Head of caudate nucleus (tissue), 42 donors: ENCODE measurements at regions of chr1 and their contacts with region 1.

Region 1: GRCh38 chr1:178189814-178190213 is 95.9 kb downstream of the RASAL2 start:
- DNase-seq: peak in 26 of 42 donors; percentile 5 to 68 (median 30)

Region 2: DNA sequence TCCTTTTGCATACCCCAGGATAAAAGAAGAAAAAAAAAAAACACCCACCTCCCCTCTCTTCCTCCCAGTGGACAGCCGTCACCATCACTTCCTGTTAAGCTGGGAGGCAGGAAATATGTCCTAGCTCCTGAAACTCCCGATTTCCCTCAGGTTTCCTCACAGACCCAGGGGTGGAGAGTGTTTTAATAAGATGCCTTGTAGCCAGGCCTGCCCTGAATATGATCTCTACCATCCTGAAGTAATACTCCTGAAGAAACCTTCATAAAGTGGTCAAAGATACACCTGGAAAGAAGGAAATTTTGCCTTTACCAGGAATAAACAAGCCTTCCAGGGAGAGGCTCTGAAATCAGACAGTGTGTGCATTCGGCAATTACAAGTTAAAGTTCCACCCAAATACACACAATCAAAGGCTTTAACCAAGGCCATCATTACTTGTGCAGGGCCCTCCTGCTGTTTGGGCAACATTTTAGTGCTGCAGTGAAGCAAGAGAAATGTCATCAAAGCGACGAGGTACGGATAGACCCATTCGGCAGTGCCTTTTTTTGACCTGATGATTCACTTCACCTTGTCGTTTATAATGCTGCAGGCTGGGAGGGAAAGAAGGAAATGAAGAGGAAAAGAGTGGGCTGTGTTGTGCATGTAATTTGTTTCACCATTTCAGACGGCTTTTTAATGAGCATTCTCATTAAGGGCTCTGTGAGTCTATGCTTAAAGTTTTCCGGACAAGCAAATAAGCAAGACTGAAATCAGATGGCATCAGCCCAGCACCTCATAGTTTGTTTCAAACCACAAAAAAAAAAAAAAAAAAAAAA is 137.0 kb before region 1 on chr1:
- intact Hi-C with region 1: loop called (anchors 5 kb)
- DNase-seq: peak in 1 of 42 donors; percentile 38

Region 3: GRCh38 chr1:178238722-178239510 is 49.1 kb after region 1 on chr1:
- intact Hi-C with region 1: no loop called
- DNase-seq: no peak